Testis (tissue), 5 donors: ENCODE measurements at regions of chr2 and their contacts with region 1.

Region 1: DNA sequence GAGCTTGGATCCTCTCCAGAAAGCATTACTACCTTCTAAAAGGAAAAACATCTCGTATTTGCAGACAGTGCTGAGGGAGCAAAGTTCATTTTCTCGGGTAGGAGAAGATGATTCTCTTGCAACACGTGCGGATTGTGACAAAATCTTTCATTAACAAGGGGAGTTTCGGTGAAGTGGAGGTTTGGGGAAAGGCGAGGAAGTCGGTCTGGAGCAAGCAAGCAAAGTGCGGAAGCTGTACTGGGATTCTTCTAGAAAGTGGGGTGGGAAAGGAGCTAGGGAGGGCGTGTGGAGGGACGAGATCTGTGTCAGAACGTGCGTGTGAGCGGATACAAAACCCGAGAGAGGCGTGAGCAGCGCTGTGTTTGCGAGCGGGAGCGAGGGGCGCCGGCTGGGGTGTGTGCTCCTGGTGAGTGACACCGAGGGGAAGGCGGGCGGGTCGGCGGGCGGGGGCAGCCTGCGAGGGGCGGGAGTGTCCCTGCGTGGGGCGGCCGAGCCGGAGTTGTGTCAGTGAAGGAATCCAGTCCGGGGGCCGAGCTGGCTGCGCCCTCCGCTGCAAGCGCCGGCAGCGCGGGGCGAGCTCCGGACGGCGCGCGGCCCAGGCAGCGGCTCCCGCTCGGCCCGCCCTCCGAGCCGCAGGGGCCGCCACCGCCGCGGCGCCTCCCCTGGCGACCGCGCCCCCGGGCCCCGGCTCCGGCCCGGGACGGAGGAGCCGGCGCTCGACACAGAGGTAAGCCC is at the start of gene SPATS2L:
- DNase-seq: peak; percentile 87
- H3K4me3 ChIP-seq: peak within 1 kb of the TSS; percentile 79 to 89
- H3K27ac ChIP-seq: peak within 1 kb of the TSS; percentile 93 to 94
- H3K4me1 ChIP-seq: peaks cover 9% of the 10 kb centered on the region
- H3K27me3 ChIP-seq: no peaks in the 10 kb centered on the region
- CTCF ChIP-seq: no peak
- POLR2A ChIP-seq: no peak
- total RNA-seq, gene SPATS2L: 49.7 to 52.9 TPM

Region 2: DNA sequence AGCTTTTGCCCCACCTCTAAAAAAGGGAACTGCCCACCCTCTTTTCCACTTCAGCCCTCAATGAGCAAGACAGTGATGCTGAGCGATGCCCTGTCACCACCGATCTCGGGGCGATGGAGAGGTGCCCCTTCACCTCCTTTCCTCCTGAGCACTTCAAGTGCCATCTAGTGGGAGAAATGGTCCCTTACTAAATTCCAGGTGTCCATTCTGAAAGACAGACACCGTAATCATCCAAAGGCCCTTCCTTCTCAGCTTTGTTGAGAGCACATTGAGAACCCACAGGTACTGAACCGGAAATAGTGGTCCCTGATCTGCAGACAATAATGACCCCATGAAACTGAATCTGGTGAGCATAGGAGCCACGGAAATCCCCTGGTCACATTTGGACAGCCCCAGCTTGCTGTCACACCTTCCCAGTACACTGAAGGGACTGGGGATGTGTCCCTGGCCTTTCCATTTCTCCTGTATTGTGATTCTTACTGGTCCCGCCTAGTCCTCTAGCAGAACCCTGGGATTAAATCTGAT is 165.0 kb after region 1 on chr2:
- intact Hi-C with region 1: loop called (anchors 10 kb)
- DNase-seq: no peak
- H3K4me3 ChIP-seq: no peak overlapping the region
- H3K27ac ChIP-seq: no peak overlapping the region
- H3K4me1 ChIP-seq: peaks cover 10% of the 10 kb centered on the region
- H3K27me3 ChIP-seq: no peaks in the 10 kb centered on the region
- CTCF ChIP-seq: peak in 2 of 3 experiments; percentile 28 to 42
- POLR2A ChIP-seq: no peak

Region 3: DNA sequence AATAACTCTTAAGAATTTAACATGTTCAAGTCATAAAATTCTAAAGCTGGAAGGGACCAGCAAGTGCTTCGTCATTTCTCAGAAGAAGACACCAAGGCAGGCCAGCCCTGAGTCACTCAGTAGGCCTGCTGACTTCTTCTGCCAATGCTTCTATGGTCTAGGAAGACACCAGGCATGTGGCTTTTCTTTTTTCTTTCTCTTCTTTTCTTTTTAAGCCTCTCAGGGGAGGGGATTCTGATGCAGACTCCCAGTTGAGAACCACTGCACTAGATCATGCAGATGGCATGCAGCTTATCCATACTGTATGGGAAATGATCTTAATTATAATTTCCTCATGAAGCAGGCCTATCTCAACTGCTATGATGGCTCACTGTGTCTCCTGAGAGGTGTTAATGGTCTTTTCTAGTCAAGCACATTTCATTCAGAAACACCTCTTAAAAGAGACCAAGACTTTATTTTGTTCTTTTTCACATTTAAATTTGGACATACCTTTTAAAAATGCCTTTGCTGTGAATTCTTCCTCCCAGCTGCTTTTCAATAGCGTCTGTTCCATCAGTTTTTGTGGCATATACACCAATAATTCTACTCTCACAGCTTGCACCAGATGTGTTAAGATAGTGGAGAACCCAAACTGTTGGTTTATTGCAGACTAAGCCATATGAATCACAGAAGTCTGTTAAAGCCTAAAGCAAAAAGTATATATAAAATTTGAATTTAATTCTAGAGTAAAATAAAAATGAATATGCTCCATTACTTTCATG is 192.2 kb after region 1 on chr2:
- intact Hi-C with region 1: no loop called
- DNase-seq: no peak
- H3K4me3 ChIP-seq: no peak overlapping the region
- H3K27ac ChIP-seq: no peak overlapping the region
- H3K4me1 ChIP-seq: no peaks in the 10 kb centered on the region
- H3K27me3 ChIP-seq: no peaks in the 10 kb centered on the region
- CTCF ChIP-seq: no peak
- POLR2A ChIP-seq: no peak